ENCODE measurements at regions of chrX and their contacts with region 1.

Region 1: DNA sequence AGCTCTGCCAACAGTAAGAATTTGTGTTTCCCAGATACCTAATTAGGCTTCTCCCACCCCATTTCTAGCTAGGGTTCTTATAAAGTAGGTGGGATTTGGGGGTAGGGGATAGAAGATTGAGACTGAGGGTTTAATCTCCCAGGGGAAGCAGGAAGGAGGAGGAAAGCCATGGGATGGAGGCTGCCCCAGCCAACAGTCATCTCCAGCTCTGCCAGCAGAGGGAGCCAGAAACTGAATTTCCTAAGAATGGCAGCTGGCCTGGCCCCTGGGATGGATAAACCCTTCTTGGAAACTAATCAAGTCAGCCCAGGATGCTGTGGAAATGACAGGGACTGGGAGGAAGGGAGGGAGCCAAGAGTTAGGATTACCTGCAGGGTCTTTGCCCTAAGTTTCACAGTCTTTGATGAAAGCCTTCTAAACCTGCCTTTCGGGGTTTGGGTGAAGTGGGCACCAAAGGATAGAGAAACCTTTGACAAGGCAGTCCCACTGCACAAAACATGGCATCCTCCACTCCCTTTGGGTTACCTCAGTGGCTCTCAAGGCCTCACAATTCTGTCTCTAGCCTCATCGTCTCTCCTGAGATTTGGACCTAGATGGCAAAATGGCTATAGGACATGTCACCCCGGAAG is 6.7 kb upstream of the ERCC6L start:
- DNase-seq: peak; percentile 48
- H3K4me3 ChIP-seq: no peak overlapping the region
- H3K27ac ChIP-seq: no peak overlapping the region
- H3K4me1 ChIP-seq: peaks cover 16% of the 10 kb centered on the region
- H3K27me3 ChIP-seq: no peaks in the 10 kb centered on the region
- CTCF ChIP-seq: peak; percentile 60 to 73
- POLR2A ChIP-seq: no peak

Region 2: GRCh38 chrX:72003811-72004750 is 241.5 kb before region 1 on chrX:
- CTCF ChIA-PET with region 1: no interaction called
- POLR2A ChIA-PET with region 1: no interaction called
- dilution Hi-C with region 1: no loop called
- intact Hi-C with region 1: loop called (anchors 10 kb)
- DNase-seq: peak; percentile 45
- H3K4me3 ChIP-seq: no peak overlapping the region
- H3K27ac ChIP-seq: peak overlapping the region; percentile 32
- H3K4me1 ChIP-seq: peaks cover 8% of the 10 kb centered on the region
- H3K27me3 ChIP-seq: peaks cover 0 to 3% of the 10 kb centered on the region in 2 experiments
- CTCF ChIP-seq: no peak
- POLR2A ChIP-seq: no peak

Region 3: DNA sequence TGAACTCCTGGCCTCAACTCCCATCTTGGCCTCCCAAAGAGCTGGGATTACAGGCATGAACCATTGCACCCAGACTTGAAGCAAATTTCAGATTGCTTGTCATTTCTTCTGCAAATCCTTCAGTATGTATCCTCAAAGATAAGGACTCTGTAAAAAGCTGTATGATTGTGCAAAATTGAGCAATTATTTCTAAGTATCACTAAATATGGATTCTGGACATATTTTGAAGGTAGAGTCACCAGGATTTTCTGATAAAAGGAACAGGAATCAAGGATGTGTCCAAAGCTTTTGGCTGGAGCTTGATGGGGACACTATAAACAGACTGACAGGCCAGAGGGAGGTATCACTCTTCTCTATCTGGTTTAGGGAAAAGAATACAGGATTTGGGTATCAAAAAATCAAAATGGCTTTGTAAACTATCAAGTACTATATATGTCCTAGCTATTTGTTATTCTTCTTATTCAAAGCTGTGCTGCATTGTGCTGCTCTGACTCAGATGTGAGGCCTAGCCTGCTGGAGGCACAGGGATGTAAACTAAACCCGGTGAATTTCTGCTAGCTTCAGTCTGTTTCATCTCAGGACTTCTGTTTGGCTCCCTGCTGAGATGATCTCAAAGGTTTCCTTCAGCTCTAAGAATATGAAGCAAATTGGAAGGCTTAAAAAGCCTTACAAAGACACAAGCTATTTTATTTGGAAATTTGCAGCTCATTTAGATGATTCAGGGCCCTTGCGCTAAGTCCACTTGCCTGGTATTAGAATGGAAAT is 23.2 kb after region 1 on chrX:
- CTCF ChIA-PET with region 1: interaction called, 9 read pairs
- POLR2A ChIA-PET with region 1: interaction called, 11 read pairs
- dilution Hi-C with region 1: no loop called
- intact Hi-C with region 1: no loop called
- DNase-seq: no peak
- H3K4me3 ChIP-seq: no peak overlapping the region
- H3K27ac ChIP-seq: peak overlapping the region; percentile 51
- H3K4me1 ChIP-seq: peaks cover 32% of the 10 kb centered on the region
- H3K27me3 ChIP-seq: no peaks in the 10 kb centered on the region
- CTCF ChIP-seq: no peak
- POLR2A ChIP-seq: no peak

Region 4: DNA sequence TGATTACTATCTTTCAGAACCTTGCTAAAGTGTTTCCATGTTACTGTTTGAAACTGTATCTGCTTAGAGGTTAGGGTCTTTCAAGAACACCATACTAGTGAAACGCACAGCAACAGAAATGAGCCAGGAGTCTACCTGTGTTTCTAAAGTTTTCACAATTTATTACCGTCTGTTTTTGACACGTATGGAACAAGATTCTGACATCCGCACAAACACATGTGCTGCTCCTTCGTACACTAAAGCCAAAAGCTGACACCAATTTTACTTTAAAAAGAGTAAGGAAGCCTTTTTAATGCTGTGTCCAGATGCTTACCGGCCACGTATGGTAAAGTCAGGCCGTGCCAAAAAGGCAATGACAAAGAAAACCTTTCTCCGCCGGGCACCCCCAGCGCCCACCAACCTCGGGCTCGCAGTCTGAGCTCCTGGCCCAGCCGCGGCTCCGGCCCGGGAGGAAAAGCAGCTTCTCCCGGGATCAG is 30.9 kb after region 1 on chrX:
- CTCF ChIA-PET with region 1: interaction called, 41 read pairs
- POLR2A ChIA-PET with region 1: interaction called, 14 read pairs
- dilution Hi-C with region 1: no loop called
- intact Hi-C with region 1: loop called (anchors 2 kb)
- DNase-seq: peak; percentile 22
- H3K4me3 ChIP-seq: peak overlapping the region; percentile 56 to 97 (median 82)
- H3K27ac ChIP-seq: peak overlapping the region; percentile 60
- H3K4me1 ChIP-seq: peaks cover 39% of the 10 kb centered on the region
- H3K27me3 ChIP-seq: peaks cover 0 to 2% of the 10 kb centered on the region in 2 experiments
- CTCF ChIP-seq: no peak
- POLR2A ChIP-seq: no peak

Region 5: GRCh38 chrX:72540318-72540717 is 294.7 kb after region 1 on chrX:
- CTCF ChIA-PET with region 1: interaction called, 17 read pairs
- POLR2A ChIA-PET with region 1: no interaction called
- dilution Hi-C with region 1: no loop called
- intact Hi-C with region 1: no loop called
- DNase-seq: peak; percentile 30
- H3K4me3 ChIP-seq: no peak overlapping the region
- H3K27ac ChIP-seq: no peak overlapping the region
- H3K4me1 ChIP-seq: no peaks in the 10 kb centered on the region
- H3K27me3 ChIP-seq: no peaks in the 10 kb centered on the region
- CTCF ChIP-seq: no peak
- POLR2A ChIP-seq: no peak

Region 6: GRCh38 chrX:72545990-72546389 is 300.4 kb after region 1 on chrX:
- CTCF ChIA-PET with region 1: interaction called, 17 read pairs
- POLR2A ChIA-PET with region 1: no interaction called
- dilution Hi-C with region 1: no loop called
- intact Hi-C with region 1: loop called (anchors 1 kb)
- DNase-seq: peak; percentile 32
- H3K4me3 ChIP-seq: no peak overlapping the region
- H3K27ac ChIP-seq: no peak overlapping the region
- H3K4me1 ChIP-seq: no peaks in the 10 kb centered on the region
- H3K27me3 ChIP-seq: no peaks in the 10 kb centered on the region
- CTCF ChIP-seq: peak; percentile 16 to 23
- POLR2A ChIP-seq: no peak

Measured in endothelial cell of umbilical vein (primary cell).